ENCODE measurements at regions of chr7 and their contacts with region 1.

Region 1: GRCh38 chr7:83936056-83936708 is 258.4 kb downstream of the SEMA3A start:
- DNase-seq: peak; percentile 47 to 66
- H3K4me3 ChIP-seq: no peak overlapping the region
- H3K27ac ChIP-seq: no peak overlapping the region
- H3K4me1 ChIP-seq: peaks cover 0 to 2% (median 0%) of the 10 kb centered on the region in 4 experiments; a peak in 1 of 7 replicates
- H3K27me3 ChIP-seq: no peaks in the 10 kb centered on the region
- CTCF ChIP-seq: peak in 2 of 3 experiments; percentile 74 to 89; a peak in 3 of 4 replicates
- EP300 ChIP-seq: no peak
- POLR2A ChIP-seq: no peak
- RAD21 ChIP-seq: peak; percentile 97 to 99

Region 2: DNA sequence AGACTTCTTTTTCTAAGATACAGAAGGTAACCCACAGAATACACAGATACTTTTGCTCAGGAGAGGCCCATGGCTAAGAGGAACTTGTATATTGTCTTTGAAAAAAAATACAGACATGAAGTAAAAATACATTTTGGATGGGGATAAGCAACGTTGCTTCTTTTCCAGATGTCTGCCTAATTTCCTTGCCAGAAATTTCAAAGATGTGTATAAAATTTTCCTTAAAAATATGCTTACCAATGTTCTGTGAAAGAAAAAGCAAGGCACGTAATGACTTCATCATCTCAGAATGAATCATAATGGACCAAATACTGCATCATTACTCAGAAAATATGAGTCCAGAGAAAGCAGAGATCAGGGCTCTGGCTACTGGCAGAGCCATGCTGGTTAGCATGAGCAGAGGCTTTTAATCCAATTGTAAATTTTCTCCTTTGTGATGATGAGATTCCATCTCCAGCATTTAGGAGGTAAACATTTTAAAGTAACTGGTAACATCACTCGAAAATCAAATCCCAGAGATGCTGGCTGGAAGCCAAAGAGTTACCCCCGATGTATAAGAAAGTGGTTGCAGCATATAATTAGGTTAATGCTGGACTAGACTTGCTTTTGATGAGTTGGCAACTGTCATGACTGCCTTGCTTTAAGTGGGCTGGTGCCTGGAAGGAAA is 14.1 kb before region 1 on chr7:
- CTCF ChIA-PET with region 1: interaction called, 10 read pairs
- POLR2A ChIA-PET with region 1: no interaction called
- DNase-seq: no peak
- H3K4me3 ChIP-seq: no peak overlapping the region
- H3K27ac ChIP-seq: no peak overlapping the region
- H3K4me1 ChIP-seq: peaks cover 0 to 5% (median 0%) of the 10 kb centered on the region in 4 experiments; a peak in 1 of 7 replicates
- H3K27me3 ChIP-seq: no peaks in the 10 kb centered on the region
- CTCF ChIP-seq: no peak
- EP300 ChIP-seq: no peak
- POLR2A ChIP-seq: no peak
- RAD21 ChIP-seq: no peak

Region 3: DNA sequence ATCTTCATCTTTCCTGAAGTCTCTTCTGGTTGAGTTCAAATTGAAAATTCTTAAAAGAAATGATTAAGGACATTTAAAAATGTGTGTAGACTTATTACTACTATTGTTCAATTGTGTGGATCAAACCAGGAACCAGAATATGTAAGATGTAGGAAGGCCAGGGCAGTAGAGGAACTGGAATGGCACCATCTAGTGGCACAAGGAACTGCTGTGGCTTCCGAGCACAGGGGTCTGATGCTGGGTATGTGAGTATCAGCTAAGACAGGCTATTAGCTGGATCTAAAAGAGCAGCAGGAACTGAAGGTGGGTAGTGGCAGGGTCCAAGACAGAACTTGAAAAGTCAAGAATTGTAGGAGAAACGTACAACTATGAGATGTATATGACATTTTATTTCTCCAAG is 11.1 kb after region 1 on chr7:
- CTCF ChIA-PET with region 1: interaction called, 92 read pairs
- POLR2A ChIA-PET with region 1: no interaction called
- DNase-seq: peak in 1 of 2 experiments; percentile 31
- H3K4me3 ChIP-seq: no peak overlapping the region
- H3K27ac ChIP-seq: no peak overlapping the region
- H3K4me1 ChIP-seq: no peaks in the 10 kb centered on the region
- H3K27me3 ChIP-seq: no peaks in the 10 kb centered on the region
- CTCF ChIP-seq: peak; percentile 54 to 86 (median 82)
- EP300 ChIP-seq: no peak
- POLR2A ChIP-seq: no peak
- RAD21 ChIP-seq: peak; percentile 61 to 74

Region 4: GRCh38 chr7:83957333-83957732 is 21.2 kb after region 1 on chr7:
- CTCF ChIA-PET with region 1: interaction called, 23 read pairs
- POLR2A ChIA-PET with region 1: no interaction called
- DNase-seq: no peak
- H3K4me3 ChIP-seq: no peak overlapping the region
- H3K27ac ChIP-seq: no peak overlapping the region
- H3K4me1 ChIP-seq: no peaks in the 10 kb centered on the region
- H3K27me3 ChIP-seq: no peaks in the 10 kb centered on the region
- CTCF ChIP-seq: no peak
- EP300 ChIP-seq: no peak
- POLR2A ChIP-seq: no peak
- RAD21 ChIP-seq: no peak

Region 5: DNA sequence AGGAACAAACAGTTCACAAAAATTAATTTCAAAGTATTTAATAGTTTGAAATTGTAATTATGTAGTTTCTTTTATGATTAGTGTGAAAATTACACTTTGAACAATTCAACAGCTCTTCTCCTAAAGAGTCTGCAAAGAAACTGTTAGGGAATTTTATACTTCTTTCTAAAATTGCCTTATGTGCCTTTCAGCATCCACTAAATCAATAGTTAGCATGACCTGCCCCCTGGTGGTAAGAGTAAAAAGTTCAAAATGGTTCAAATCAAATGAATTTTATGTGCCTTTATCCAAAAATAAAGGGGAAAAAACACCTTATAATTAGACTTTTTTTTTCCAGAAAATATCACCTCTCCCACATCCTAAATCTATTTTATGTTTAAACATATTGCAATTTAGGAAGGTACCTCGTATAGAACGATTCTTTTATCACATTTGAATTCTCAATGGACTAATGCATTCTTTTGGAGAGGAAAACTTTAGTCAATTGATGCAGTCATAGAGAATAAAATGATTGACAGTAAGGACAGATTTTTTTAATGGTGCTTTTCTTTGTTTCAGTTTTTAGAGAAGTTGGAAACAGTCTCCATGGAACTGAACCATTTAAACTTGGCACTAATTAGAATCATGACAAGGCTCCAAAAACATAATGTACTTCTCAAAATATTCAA is 1087.0 kb after region 1 on chr7:
- CTCF ChIA-PET with region 1: interaction called, 134 read pairs
- POLR2A ChIA-PET with region 1: no interaction called
- DNase-seq: no peak
- H3K4me3 ChIP-seq: no peak overlapping the region
- H3K27ac ChIP-seq: no peak overlapping the region
- H3K4me1 ChIP-seq: peaks cover 0 to 10% (median 0%) of the 10 kb centered on the region in 4 experiments; a peak in 1 of 7 replicates
- H3K27me3 ChIP-seq: no peaks in the 10 kb centered on the region
- CTCF ChIP-seq: peak in 2 of 3 experiments; percentile 46 to 49; a peak in 2 of 4 replicates
- EP300 ChIP-seq: no peak
- POLR2A ChIP-seq: no peak
- RAD21 ChIP-seq: peak; percentile 79 to 84

Region 6: GRCh38 chr7:85030893-85031292 is 1094.7 kb after region 1 on chr7:
- CTCF ChIA-PET with region 1: interaction called, 134 read pairs
- POLR2A ChIA-PET with region 1: no interaction called
- DNase-seq: no peak
- H3K4me3 ChIP-seq: no peak overlapping the region
- H3K27ac ChIP-seq: no peak overlapping the region
- H3K4me1 ChIP-seq: no peaks in the 10 kb centered on the region
- H3K27me3 ChIP-seq: no peaks in the 10 kb centered on the region
- CTCF ChIP-seq: peak in 1 of 3 experiments; percentile 38; a peak in 2 of 4 replicates
- EP300 ChIP-seq: no peak
- POLR2A ChIP-seq: no peak
- RAD21 ChIP-seq: peak; percentile 54 to 57